ENCODE measurements at regions of chr12 and their contacts with region 1.

Region 1: GRCh38 chr12:57182921-57183790 is 33.4 kb upstream of the NXPH4 start:
- DNase-seq: peak; percentile 64 to 90 (median 77)
- H3K4me3 ChIP-seq: no peak overlapping the region
- H3K27ac ChIP-seq: no peak overlapping the region
- H3K4me1 ChIP-seq: no peaks in the 10 kb centered on the region
- H3K27me3 ChIP-seq: no peaks in the 10 kb centered on the region
- CTCF ChIP-seq: peak; percentile 80 to 93 (median 88)
- POLR2A ChIP-seq: no peak

Region 2: GRCh38 chr12:57069523-57069922 is 113.6 kb before region 1 on chr12:
- intact Hi-C with region 1: loop called (anchors 5 to 10 kb)
- DNase-seq: peak; percentile 76 to 93 (median 85)
- H3K4me3 ChIP-seq: no peak overlapping the region
- H3K27ac ChIP-seq: peak overlapping the region in 4 of 5 donors; percentile 47 to 84 (median 70)
- H3K4me1 ChIP-seq: peaks cover 5 to 6% of the 10 kb centered on the region in 2 donors
- H3K27me3 ChIP-seq: no peaks in the 10 kb centered on the region
- CTCF ChIP-seq: peak; percentile 76 to 98 (median 95)
- POLR2A ChIP-seq: peak in 1 of 2 donors; percentile 4

Region 3: DNA sequence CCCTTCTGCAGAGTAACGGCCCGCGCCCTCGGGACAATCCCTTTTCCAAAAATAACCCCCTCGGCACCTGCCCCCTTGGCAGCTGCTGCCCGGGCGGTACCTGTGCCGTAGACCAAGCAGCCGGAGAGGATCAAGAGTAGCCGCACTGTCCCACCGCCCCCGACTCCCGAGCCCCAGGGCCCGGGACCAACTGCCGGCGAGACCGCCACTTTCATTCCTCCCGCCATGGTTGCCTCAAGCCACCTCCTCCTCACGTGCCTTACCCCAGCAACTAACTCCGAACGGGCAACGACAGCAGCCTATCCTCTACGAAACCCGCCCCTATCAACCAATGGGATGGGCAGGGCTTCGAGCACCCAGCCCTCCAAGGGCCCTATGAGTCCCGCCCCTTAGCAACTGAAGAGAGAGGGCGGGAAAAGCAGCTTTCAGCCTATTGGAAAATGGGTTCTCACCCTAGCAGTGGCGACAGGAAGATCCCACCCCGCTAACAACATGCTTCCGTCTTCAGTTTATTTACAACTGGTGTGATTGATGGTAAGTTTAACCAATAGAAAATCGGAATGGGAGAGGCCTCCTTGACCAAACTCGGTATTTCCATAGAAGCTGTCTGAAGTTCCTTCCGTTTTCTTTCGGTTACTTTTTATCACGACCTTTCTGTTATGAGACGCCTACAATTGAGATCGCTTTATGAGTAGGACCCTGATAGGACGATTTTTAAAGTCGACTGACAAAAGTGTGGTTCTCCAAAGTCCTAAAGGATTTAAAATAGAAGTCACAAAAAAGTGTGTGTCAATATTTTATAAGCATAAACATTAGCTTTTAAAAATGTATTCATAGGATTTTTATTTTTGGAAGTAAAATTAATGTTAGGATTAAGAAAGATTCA is 104.4 kb before region 1 on chr12 and contains the start of gene NEMP1:
- intact Hi-C with region 1: loop called in 1 of 2 experiments (anchors 10 kb)
- DNase-seq: peak; percentile 96 to 100 (median 99)
- H3K4me3 ChIP-seq: peak within 1 kb of the TSS in 3 of 4 donors; percentile 54 to 77 (median 64)
- H3K27ac ChIP-seq: peak within 1 kb of the TSS; percentile 23 to 83 (median 73)
- H3K4me1 ChIP-seq: peaks cover 12 to 19% of the 10 kb centered on the region in 2 donors
- H3K27me3 ChIP-seq: no peaks in the 10 kb centered on the region
- CTCF ChIP-seq: no peak
- POLR2A ChIP-seq: peak in 1 of 2 donors; percentile 63
- total RNA-seq, gene NEMP1: 5.8 to 16.4 (median 10.0) TPM

Measured in adrenal gland (tissue), 19 donors.